Panc1 (cell line): ENCODE measurements at regions of chr22 and their contacts with region 1.

Region 1: DNA sequence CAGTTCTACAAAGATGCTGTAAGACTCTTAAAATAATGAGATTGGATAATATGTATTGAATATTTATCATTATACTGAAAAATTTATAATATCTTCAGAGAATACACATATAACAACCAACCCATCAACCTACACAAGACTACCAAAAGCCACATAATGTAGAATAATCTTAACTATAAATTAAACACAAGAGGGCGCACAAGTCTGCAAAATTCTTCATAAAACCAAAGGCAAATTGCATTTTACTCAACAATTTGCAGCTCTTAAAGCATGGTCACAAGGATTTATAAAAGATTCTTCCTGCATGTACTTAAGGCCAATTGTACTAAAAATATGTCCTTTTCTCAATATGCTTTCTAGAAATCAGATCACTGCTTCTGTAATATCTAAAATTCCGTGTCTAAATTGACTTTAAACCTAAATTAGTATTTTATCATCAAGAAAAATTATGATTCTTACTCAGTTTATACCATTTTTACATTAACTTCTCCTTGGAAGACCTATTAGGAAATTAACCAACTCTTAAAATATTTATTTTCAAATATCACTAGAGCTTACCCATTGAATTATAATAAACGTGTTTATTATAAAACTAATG is 79.0 kb downstream of the TTC28 start:
- DNase-seq: no peak
- ATAC-seq: 0 out of 2 replicates have a peak, but pooled peaks have one; percentile 56
- H3K4me3 ChIP-seq: no peak overlapping the region
- H3K27ac ChIP-seq: no peak overlapping the region
- H3K4me1 ChIP-seq: no peaks in the 10 kb centered on the region; the same call in 1 of the 2 replicates
- H3K27me3 ChIP-seq: no peaks in the 10 kb centered on the region
- CTCF ChIP-seq: peak; percentile 37; the same call in 1 of the 2 replicates

Region 2: GRCh38 chr22:28829358-28830181 is 228.9 kb after region 1 on chr22:
- CTCF ChIA-PET with region 1: interaction called, 6 read pairs
- POLR2A ChIA-PET with region 1: no interaction called
- in situ Hi-C with region 1: no loop called
- intact Hi-C with region 1: loop called (anchors 5 kb)
- DNase-seq: peak; percentile 60
- ATAC-seq: peak; percentile 87
- H3K4me3 ChIP-seq: no peak overlapping the region
- H3K27ac ChIP-seq: no peak overlapping the region
- H3K4me1 ChIP-seq: no peaks in the 10 kb centered on the region
- H3K27me3 ChIP-seq: no peaks in the 10 kb centered on the region
- CTCF ChIP-seq: peak; percentile 95